ENCODE measurements at regions of chr7 and their contacts with region 1.

Region 1: GRCh38 chr7:97872025-97872669 is at the start of gene ASNS:
- DNase-seq: peak; percentile 86
- H3K4me3 Mint-ChIP-seq: peak within 1 kb of the TSS; percentile 90
- H3K27ac Mint-ChIP-seq: peak within 1 kb of the TSS; percentile 86
- H3K4me1 Mint-ChIP-seq: peaks cover 20% of the 10 kb centered on the region
- H3K27me3 Mint-ChIP-seq: no peaks in the 10 kb centered on the region
- total RNA-seq, gene ASNS: 71.1 and 79.6 TPM in 2 replicates

Region 2: GRCh38 chr7:97733276-97734161 is 138.6 kb before region 1 on chr7:
- intact Hi-C with region 1: no loop called
- DNase-seq: no peak
- H3K4me3 Mint-ChIP-seq: no peak overlapping the region
- H3K27ac Mint-ChIP-seq: no peak overlapping the region
- H3K4me1 Mint-ChIP-seq: no peaks in the 10 kb centered on the region
- H3K27me3 Mint-ChIP-seq: peaks cover 50% of the 10 kb centered on the region

Region 3: GRCh38 chr7:97819161-97819560 is 53.0 kb before region 1 on chr7:
- intact Hi-C with region 1: no loop called
- DNase-seq: no peak
- H3K4me3 Mint-ChIP-seq: no peak overlapping the region
- H3K27ac Mint-ChIP-seq: no peak overlapping the region
- H3K4me1 Mint-ChIP-seq: no peaks in the 10 kb centered on the region
- H3K27me3 Mint-ChIP-seq: peaks cover 6% of the 10 kb centered on the region

Region 4: GRCh38 chr7:97971990-97972943 is 100.1 kb after region 1 on chr7:
- intact Hi-C with region 1: loop called (anchors 1 kb)
- DNase-seq: peak; percentile 80
- H3K4me3 Mint-ChIP-seq: peak overlapping the region; percentile 99
- H3K27ac Mint-ChIP-seq: peak overlapping the region; percentile 94
- H3K4me1 Mint-ChIP-seq: peaks cover 13% of the 10 kb centered on the region
- H3K27me3 Mint-ChIP-seq: peaks cover 4% of the 10 kb centered on the region

Region 5: DNA sequence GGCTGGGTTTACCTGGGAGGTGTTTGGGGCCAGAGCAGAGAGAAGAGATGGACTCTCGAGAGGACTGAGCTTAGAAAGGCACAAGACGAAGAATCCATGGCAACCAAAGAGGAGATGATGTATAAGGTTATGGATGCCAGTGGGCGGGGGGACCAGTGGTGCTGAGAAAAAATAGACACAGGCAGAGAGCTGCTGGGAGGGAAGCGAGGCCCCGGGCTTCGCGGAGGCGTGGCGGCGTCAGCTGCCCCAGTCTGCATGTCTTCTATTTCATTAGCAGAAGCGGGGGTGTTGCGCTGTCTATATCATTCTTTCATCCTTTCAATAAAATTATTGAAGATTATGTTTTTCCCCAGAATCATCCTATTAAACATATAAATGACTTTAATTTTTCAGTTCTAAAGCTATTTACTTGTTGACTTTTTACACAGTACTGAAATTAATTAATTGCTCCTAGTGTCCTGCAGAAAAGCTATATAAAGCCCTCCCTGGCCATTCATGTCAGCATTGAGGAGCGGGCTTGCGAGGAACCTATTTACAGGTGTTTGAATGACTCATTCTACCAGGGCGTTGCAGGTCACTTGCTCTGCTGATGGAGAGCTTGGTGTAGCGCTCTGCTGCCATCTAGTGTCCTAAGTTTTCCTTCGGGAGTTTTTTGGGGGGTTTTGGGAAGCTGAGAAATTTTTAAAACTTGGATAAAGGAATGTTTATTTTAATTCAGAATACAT is 296.2 kb after region 1 on chr7:
- intact Hi-C with region 1: loop called (anchors 10 kb)
- DNase-seq: peak; percentile 49
- H3K4me3 Mint-ChIP-seq: no peak overlapping the region
- H3K27ac Mint-ChIP-seq: no peak overlapping the region
- H3K4me1 Mint-ChIP-seq: no peaks in the 10 kb centered on the region
- H3K27me3 Mint-ChIP-seq: no peaks in the 10 kb centered on the region

Region 6: GRCh38 chr7:98400542-98401340 is 528.6 kb after region 1 on chr7 and contains the start of gene BAIAP2L1:
- intact Hi-C with region 1: loop called (anchors 2 kb)
- DNase-seq: peak; percentile 56
- H3K4me3 Mint-ChIP-seq: peak within 1 kb of the TSS; percentile 33
- H3K27ac Mint-ChIP-seq: peak within 1 kb of the TSS; percentile 31
- H3K4me1 Mint-ChIP-seq: peaks cover 9% of the 10 kb centered on the region
- H3K27me3 Mint-ChIP-seq: peaks cover 29% of the 10 kb centered on the region
- total RNA-seq, gene BAIAP2L1: 1.7 and 2.7 TPM in 2 replicates

Region 7: DNA sequence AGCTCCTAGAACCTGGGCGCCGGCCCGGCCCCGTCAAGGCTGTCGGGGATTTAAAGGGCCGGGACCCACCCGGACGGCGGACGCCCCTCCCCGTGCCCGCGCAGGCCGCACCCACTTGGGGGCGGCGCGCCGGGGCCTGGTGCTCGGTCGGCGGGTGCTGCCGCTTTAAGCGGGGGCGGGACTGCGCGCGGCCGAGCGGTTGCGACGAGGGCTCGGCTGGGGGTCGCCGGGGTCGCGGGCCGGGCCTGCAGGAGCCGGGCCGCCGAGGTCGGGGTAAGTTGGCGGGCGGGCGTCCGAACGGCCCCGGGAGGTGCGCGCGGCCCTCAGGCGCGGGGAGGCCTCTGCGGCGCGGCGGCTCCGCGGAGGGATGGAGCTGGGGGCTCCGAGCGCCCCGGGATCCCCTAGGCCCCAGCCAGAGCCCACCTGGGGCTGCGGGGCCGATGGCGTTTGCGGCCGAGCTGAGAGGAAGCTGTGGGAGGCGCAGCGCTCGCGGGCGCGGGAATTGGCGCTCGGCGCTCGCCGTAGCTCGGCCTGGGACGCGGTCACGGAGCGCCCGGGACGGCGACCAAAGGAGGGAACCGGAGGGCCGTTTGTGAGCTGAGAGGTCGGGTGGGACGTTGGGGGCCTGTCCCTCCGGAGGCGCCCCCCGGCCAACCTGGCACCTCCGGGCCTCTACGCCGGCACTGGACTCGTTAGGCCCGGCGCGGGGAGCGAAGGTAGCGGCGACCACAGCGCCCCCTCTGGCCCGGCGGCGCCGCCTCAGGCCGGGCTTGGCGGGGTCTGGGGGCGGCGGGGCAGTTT is 1006.4 kb after region 1 on chr7 and contains the start of gene TRRAP:
- intact Hi-C with region 1: loop called (anchors 10 kb)
- DNase-seq: peak; percentile 70
- H3K4me3 Mint-ChIP-seq: peak within 1 kb of the TSS; percentile 95
- H3K27ac Mint-ChIP-seq: peak within 1 kb of the TSS; percentile 92
- H3K4me1 Mint-ChIP-seq: peaks cover 13% of the 10 kb centered on the region
- H3K27me3 Mint-ChIP-seq: peaks cover 10% of the 10 kb centered on the region
- total RNA-seq, gene TRRAP: 66.9 and 69.6 TPM in 2 replicates

Measured in activated T-helper 1 cell treated with anti-CD3 and anti-CD28 coated beads, Interleukin-12 subunit alpha, Interleukin-12 subunit beta, Interleukin-2, Interleukin-4 antibody, amounts not matched to agents 30 ng/mL and 10 ng/mL and 1 ng/mL, durations not matched to agents 14 hours and 24 hours and 36 hours (primary cell).